SK-N-SH (cell line): ENCODE measurements at regions of chr5 and their contacts with region 1.

Region 1: DNA sequence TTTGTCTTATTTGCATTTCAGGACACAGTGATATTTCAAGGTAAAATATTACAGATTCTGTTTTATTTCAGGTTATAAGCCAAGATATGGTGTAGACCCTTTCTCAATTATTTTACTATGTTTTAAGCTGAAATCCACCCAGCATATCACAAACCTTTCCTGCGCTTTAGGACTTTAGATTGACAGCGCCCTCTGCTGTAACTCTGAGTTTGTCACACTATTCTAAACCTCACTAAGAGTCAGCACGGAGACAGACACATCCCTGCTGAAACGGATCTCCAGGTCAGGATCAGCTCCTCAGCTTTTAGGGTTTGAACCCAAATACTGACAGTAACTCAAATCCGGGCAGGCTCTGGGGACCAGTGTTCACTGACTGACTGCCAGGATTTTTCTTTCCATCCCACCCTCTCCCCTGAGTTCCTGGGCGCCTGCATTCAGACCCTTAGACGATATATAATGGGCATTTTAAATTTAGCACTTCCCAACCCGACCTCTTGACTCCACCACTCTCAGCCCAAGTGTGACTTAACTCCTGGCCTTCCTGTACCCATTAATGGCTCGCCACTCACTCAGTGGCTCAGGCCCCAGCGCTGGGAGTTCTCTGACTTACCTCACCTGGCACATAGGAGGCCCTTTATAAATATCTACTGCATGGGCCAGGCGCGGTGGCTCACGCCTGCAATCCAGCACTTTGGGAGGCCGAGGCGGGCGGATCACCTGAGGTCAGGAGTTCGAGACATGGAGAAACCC is 33.5 kb downstream of the TLX3 start:
- DNase-seq: peak; percentile 73
- H3K4me3 ChIP-seq: no peak overlapping the region; a peak in 1 of 4 replicates
- H3K27ac ChIP-seq: no peak overlapping the region
- H3K4me1 ChIP-seq: peaks cover 0 to 2% of the 10 kb centered on the region in 2 experiments; a peak in 1 of 4 replicates
- H3K27me3 ChIP-seq: no peaks in the 10 kb centered on the region
- CTCF ChIP-seq: peak; percentile 84
- EP300 ChIP-seq: no peak
- RAD21 ChIP-seq: peak; percentile 96

Region 2: GRCh38 chr5:170747851-170748250 is 594.7 kb before region 1 on chr5:
- CTCF ChIA-PET with region 1: interaction called, 15 read pairs
- POLR2A ChIA-PET with region 1: no interaction called
- DNase-seq: peak; percentile 59
- H3K4me3 ChIP-seq: no peak overlapping the region
- H3K27ac ChIP-seq: peak overlapping the region in 1 of 2 experiments; percentile 20; a peak in 1 of 4 replicates
- H3K4me1 ChIP-seq: peaks cover 0 to 77% of the 10 kb centered on the region in 2 experiments; a peak in 2 of 4 replicates
- H3K27me3 ChIP-seq: no peaks in the 10 kb centered on the region
- CTCF ChIP-seq: peak; percentile 48
- EP300 ChIP-seq: no peak
- RAD21 ChIP-seq: peak; percentile 33; the same call in 1 of the 2 replicates

Region 3: GRCh38 chr5:171201310-171201709 is 141.2 kb before region 1 on chr5:
- CTCF ChIA-PET with region 1: interaction called, 62 read pairs
- POLR2A ChIA-PET with region 1: no interaction called
- DNase-seq: peak; percentile 49
- H3K4me3 ChIP-seq: no peak overlapping the region
- H3K27ac ChIP-seq: peak overlapping the region in 1 of 2 experiments; percentile 89; a peak in 2 of 4 replicates
- H3K4me1 ChIP-seq: peaks cover 0 to 37% of the 10 kb centered on the region in 2 experiments; a peak in 2 of 4 replicates
- H3K27me3 ChIP-seq: no peaks in the 10 kb centered on the region
- CTCF ChIP-seq: no peak
- EP300 ChIP-seq: peak in 1 of 2 experiments; percentile 98; a peak in 2 of 4 replicates
- RAD21 ChIP-seq: peak; percentile 49

Region 4: GRCh38 chr5:171272996-171273970 is 69.3 kb before region 1 on chr5:
- CTCF ChIA-PET with region 1: interaction called, 39 read pairs
- POLR2A ChIA-PET with region 1: no interaction called
- DNase-seq: peak; percentile 58
- H3K4me3 ChIP-seq: no peak overlapping the region
- H3K27ac ChIP-seq: peak overlapping the region in 1 of 2 experiments; percentile 53; a peak in 2 of 4 replicates
- H3K4me1 ChIP-seq: peaks cover 4 to 16% of the 10 kb centered on the region in 2 experiments; a peak in 3 of 4 replicates
- H3K27me3 ChIP-seq: no peaks in the 10 kb centered on the region
- CTCF ChIP-seq: peak; percentile 67
- EP300 ChIP-seq: 0 out of 4 replicates have a peak, but pooled peaks of 1 of the 2 experiments have one; percentile 3
- RAD21 ChIP-seq: peak; percentile 87

Region 5: GRCh38 chr5:171317230-171317629 is 25.3 kb before region 1 on chr5:
- CTCF ChIA-PET with region 1: interaction called, 27 read pairs
- POLR2A ChIA-PET with region 1: no interaction called
- DNase-seq: no peak
- H3K4me3 ChIP-seq: no peak overlapping the region
- H3K27ac ChIP-seq: no peak overlapping the region; a peak in 1 of 4 replicates
- H3K4me1 ChIP-seq: peaks cover 0 to 31% of the 10 kb centered on the region in 2 experiments; a peak in 2 of 4 replicates
- H3K27me3 ChIP-seq: no peaks in the 10 kb centered on the region
- CTCF ChIP-seq: no peak
- EP300 ChIP-seq: no peak
- RAD21 ChIP-seq: no peak

Region 6: DNA sequence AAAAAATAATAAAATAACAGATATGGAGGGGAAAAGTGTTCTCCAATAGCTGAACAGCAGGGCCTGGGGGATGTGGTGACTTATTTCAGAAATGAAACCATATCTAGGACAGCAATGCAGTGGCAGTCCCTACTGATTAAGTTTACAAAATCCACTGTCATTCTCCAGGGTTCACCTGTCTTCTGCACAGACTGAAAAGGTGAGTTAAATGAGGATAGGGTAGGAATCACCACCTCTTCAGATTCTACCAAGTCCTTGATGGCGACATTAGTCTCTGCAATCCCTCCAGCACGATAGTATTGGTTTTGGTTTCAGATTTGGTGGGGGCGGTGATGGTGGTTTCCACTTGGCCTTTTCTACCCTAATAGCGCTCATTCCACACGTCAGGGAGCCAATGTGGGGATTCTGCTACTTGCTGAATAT is 12.8 kb after region 1 on chr5:
- CTCF ChIA-PET with region 1: interaction called, 45 read pairs
- POLR2A ChIA-PET with region 1: no interaction called
- DNase-seq: no peak
- H3K4me3 ChIP-seq: no peak overlapping the region
- H3K27ac ChIP-seq: no peak overlapping the region
- H3K4me1 ChIP-seq: peaks cover 0 to 5% of the 10 kb centered on the region in 2 experiments; a peak in 1 of 4 replicates
- H3K27me3 ChIP-seq: no peaks in the 10 kb centered on the region
- CTCF ChIP-seq: no peak
- EP300 ChIP-seq: no peak
- RAD21 ChIP-seq: no peak

Region 7: GRCh38 chr5:171445644-171446516 is 103.3 kb after region 1 on chr5:
- CTCF ChIA-PET with region 1: no interaction called
- POLR2A ChIA-PET with region 1: no interaction called
- DNase-seq: no peak
- H3K4me3 ChIP-seq: no peak overlapping the region
- H3K27ac ChIP-seq: no peak overlapping the region
- H3K4me1 ChIP-seq: no peaks in the 10 kb centered on the region; a peak in 1 of 4 replicates
- H3K27me3 ChIP-seq: no peaks in the 10 kb centered on the region
- CTCF ChIP-seq: no peak
- EP300 ChIP-seq: no peak
- RAD21 ChIP-seq: no peak